Ascending aorta (tissue), 2 donors: ENCODE measurements at regions of chr9 and their contacts with region 1.

Region 1: DNA sequence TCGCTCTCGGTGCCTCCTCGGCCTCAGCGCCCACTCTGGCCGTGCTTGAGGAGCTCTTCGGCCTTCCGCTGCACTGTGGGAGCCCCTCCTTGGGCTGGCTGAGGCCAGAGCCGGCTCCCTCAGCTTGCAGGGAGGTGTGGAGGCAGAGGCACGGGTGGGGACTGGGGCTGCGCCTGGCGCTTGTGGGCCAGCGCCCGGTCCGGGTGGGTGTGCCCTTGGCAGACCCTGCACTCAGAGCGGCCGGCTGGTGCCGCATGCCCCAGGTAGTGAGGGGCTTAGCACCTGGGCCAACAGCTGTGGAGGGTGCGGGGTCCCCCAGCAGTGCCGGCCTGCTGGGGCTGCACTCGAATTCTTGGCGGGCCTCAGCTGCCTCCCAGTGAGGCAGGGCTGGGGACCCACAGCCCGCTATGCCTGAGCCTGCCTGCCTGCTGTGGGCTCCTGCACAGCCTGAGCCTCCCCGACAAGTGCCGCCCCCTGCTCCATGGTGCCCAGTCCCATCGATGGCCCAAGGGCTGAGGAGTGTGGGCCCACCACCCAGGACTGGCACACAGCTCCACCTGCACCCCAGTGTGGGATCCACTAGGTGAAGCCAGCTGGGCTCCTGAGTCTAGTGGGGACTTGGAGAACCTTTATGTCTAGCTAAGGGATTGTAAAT is 2085.2 kb upstream of the ACO1 start:
- DNase-seq: no peak
- H3K4me3 ChIP-seq: no peak overlapping the region
- H3K27ac ChIP-seq: no peak overlapping the region
- H3K4me1 ChIP-seq: no peaks in the 10 kb centered on the region
- H3K27me3 ChIP-seq: no peaks in the 10 kb centered on the region
- CTCF ChIP-seq: no peak

Region 2: GRCh38 chr9:30244877-30245276 is 54.4 kb before region 1 on chr9:
- intact Hi-C with region 1: loop called (anchors 10 kb)
- DNase-seq: no peak
- H3K4me3 ChIP-seq: no peak overlapping the region
- H3K27ac ChIP-seq: no peak overlapping the region
- H3K4me1 ChIP-seq: no peaks in the 10 kb centered on the region
- H3K27me3 ChIP-seq: no peaks in the 10 kb centered on the region
- CTCF ChIP-seq: no peak